Ovary (tissue), 10 donors: ENCODE measurements at regions of chr3 and their contacts with region 1.

Region 1: GRCh38 chr3:50600841-50601591 is 10.6 kb downstream of the CISH start:
- DNase-seq: peak; percentile 97 to 99 (median 97)
- H3K4me3 ChIP-seq: peak overlapping the region; percentile 19
- H3K27ac ChIP-seq: peak overlapping the region; percentile 75 to 98
- H3K4me1 ChIP-seq: peaks cover 52% of the 10 kb centered on the region
- H3K27me3 ChIP-seq: no peaks in the 10 kb centered on the region
- CTCF ChIP-seq: no peak
- EP300 ChIP-seq: peak; percentile 94
- POLR2A ChIP-seq: peak; percentile 33

Region 2: GRCh38 chr3:50350527-50351322 is 250.3 kb before region 1 on chr3 and contains the starts of genes CYB561D2 and NPRL2:
- intact Hi-C with region 1: loop called in 2 of 4 experiments (anchors 5 to 10 kb)
- DNase-seq: peak; percentile 94 to 95 (median 94)
- H3K4me3 ChIP-seq: peak within 1 kb of the TSS; percentile 75
- H3K27ac ChIP-seq: peak within 1 kb of the TSS; percentile 77 to 87
- H3K4me1 ChIP-seq: peaks cover 11% of the 10 kb centered on the region
- H3K27me3 ChIP-seq: no peaks in the 10 kb centered on the region
- CTCF ChIP-seq: no peak
- EP300 ChIP-seq: no peak
- POLR2A ChIP-seq: peak; percentile 65
- total RNA-seq, gene CYB561D2: 8.0 to 17.1 (median 9.6) TPM
- total RNA-seq, gene NPRL2: 19.4 to 26.3 (median 22.4) TPM

Region 3: GRCh38 chr3:50358911-50359759 is 241.9 kb before region 1 on chr3 and contains the start of gene TMEM115:
- intact Hi-C with region 1: loop called in 2 of 4 experiments (anchors 5 to 10 kb)
- DNase-seq: peak; percentile 94 to 97 (median 96)
- H3K4me3 ChIP-seq: peak within 1 kb of the TSS; percentile 98
- H3K27ac ChIP-seq: peak within 1 kb of the TSS; percentile 84 to 90
- H3K4me1 ChIP-seq: peaks cover 20% of the 10 kb centered on the region
- H3K27me3 ChIP-seq: no peaks in the 10 kb centered on the region
- CTCF ChIP-seq: no peak
- EP300 ChIP-seq: no peak
- POLR2A ChIP-seq: peak; percentile 71
- total RNA-seq, gene TMEM115: 32.3 to 58.4 (median 36.9) TPM